Astrocyte of the cerebellum (primary cell): ENCODE measurements at regions of chr6 and their contacts with region 1.

Region 1: GRCh38 chr6:75135450-75135849 is 70.4 kb downstream of the COL12A1 start:
- DNase-seq: peak; percentile 18
- H3K4me3 ChIP-seq: no peak overlapping the region
- CTCF ChIP-seq: no peak

Region 2: GRCh38 chr6:75171567-75171966 is 36.1 kb after region 1 on chr6:
- in situ Hi-C with region 1: loop called (anchors 5 kb)
- DNase-seq: no peak
- H3K4me3 ChIP-seq: no peak overlapping the region
- CTCF ChIP-seq: no peak